Heart right ventricle (tissue), 16 donors: ENCODE measurements at regions of chr15 and their contacts with region 1.

Region 1: GRCh38 chr15:73318463-73319351 is 50.1 kb downstream of the HCN4 start:
- DNase-seq: no peak
- ATAC-seq: peak in 2 of 8 donors; percentile 25 to 48
- H3K4me3 ChIP-seq: no peak overlapping the region
- H3K27ac ChIP-seq: no peak overlapping the region
- H3K4me1 ChIP-seq: no peaks in the 10 kb centered on the region
- H3K27me3 ChIP-seq: peaks cover 0 to 39% (median 25%) of the 10 kb centered on the region in 7 donors
- CTCF ChIP-seq: no peak

Region 2: DNA sequence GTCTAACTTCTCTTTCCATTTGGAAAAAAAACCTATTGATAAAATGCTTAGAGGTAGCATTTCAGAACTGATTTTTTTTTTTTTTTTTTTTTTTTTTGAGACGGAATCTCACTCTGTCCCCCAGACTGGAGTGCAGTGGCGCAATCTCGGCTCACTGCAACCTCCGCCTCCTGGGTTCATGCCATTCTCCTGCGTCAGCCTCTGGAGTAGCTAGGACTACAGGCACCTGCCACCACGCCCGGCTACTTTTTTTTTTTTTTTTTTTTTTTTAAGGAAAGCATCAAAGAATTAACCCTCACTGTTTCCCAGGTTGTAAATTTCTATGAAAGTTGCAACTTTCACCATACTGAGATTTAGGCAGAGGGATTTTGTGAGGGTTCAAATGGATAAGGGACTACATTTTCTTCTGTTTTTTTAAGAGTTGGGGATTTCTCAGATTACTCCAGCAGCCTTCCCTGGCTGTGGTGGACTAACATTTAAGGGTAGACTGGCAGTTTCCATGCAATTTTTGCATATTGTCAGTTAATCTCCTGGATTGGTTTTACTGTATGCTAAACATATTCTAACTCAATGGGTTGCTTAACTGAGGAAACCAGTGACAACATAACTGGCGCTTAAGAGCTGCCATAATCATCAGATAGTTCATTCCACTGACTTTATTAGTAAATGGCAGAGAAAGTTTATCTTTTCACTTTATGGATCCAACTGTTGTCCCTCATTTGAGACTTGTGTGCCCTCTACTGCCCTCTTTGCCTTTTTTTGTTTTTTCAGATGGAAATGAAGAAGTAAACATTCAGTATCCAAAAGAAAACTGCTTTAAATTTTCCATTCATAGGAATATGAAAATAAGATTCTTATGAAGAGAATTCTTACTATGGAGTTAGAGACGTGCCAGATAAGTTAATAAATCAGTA is 220.8 kb after region 1 on chr15:
- intact Hi-C with region 1: loop called in 2 of 10 experiments (anchors 10 kb)
- DNase-seq: no peak
- ATAC-seq: no peak
- H3K4me3 ChIP-seq: no peak overlapping the region
- H3K27ac ChIP-seq: no peak overlapping the region
- H3K4me1 ChIP-seq: peaks cover 0 to 2% (median 0%) of the 10 kb centered on the region in 9 donors
- H3K27me3 ChIP-seq: no peaks in the 10 kb centered on the region
- CTCF ChIP-seq: peak in 2 of 9 donors; percentile 22 to 25